ENCODE measurements at regions of chr12 and their contacts with region 1.

Region 1: DNA sequence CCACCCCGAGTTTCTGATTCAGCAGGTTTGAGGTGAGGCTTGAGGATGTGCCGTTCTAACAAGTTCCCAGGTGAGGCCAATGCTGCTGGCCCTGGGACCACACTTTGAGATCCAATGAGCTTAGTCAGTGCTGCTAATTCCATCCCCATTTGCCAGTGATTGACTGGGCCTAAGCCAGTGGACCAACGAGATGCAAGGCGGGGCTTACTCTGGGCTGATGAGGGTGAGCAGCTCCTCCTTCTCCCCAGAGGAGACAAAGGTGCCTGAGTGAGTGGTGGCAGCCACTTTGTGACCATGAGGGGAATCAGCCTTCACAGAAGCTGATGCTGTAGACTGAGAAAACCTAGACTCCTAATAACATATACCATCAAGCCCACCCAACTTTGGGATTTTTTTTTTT is 23.1 kb upstream of the HNF1A start:
- DNase-seq: peak; percentile 80
- ATAC-seq: peak; percentile 97
- H3K4me3 ChIP-seq: no peak overlapping the region
- H3K27ac ChIP-seq: no peak overlapping the region
- H3K4me1 ChIP-seq: peaks cover 12 to 39% of the 10 kb centered on the region in 2 experiments; a peak in 3 of 4 replicates
- H3K27me3 ChIP-seq: no peaks in the 10 kb centered on the region
- CTCF ChIP-seq: no peak
- POLR2A ChIP-seq: no peak
- RAD21 ChIP-seq: no peak

Region 2: DNA sequence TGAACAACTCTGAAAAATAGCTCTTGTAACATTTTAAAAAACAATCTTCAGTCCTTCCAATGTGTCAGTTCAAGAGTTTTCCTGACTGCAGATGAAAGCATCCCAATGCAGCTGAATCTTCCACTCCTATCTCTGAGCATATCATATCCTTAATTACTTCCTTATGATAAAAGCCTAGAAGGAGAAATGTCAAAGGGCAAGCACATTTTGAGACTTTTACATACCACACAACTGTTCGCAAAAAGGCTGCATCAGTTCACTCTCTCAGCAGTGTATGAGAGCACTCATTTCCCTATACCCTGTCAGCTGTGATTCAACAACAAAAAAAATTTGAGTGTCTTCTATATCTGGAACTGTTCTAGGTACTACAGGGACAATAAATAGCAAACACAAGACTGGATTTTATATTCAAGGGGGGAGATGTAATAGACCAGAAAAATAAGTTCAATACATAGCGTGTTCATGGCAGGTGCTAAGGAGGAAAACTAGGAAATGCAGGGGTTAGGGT is 163.5 kb before region 1 on chr12:
- CTCF ChIA-PET with region 1: no interaction called
- POLR2A ChIA-PET with region 1: no interaction called
- RAD21 ChIA-PET with region 1: no interaction called
- intact Hi-C with region 1: no loop called
- DNase-seq: no peak
- ATAC-seq: no peak
- H3K4me3 ChIP-seq: no peak overlapping the region
- H3K27ac ChIP-seq: no peak overlapping the region
- H3K4me1 ChIP-seq: no peaks in the 10 kb centered on the region
- H3K27me3 ChIP-seq: no peaks in the 10 kb centered on the region
- CTCF ChIP-seq: no peak
- POLR2A ChIP-seq: no peak
- RAD21 ChIP-seq: no peak

Region 3: DNA sequence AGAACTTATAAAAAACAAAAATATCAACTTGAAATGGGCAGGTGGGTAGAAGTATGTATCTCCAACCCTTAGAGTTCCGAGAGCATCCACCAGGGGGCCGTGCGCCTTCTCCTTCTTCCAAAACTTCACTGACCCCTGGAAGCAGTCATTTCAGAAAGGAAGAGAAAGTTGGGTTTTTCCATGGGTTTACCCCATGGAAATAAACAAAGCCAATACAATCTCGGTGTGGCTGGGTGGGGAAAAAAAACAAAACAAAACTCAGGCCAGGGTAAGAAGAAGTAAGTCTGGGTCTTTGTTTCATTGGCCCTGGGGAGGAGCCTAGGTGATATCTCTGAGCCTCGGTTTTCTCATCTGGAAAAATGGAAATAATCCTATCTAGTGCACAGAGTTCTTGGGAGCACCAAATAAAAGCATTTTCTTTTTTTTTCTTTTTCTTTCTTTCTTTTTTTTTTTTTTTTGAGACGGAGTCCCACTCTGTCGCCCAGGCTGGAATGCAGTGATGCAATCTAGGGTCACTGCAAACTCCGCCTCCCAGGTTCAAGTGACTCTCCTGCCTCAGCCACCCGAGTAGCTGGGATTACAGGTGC is 10.5 kb before region 1 on chr12:
- CTCF ChIA-PET with region 1: interaction called, 16 read pairs
- POLR2A ChIA-PET with region 1: interaction called, 8 read pairs
- RAD21 ChIA-PET with region 1: no interaction called
- intact Hi-C with region 1: no loop called
- DNase-seq: no peak
- ATAC-seq: peak; percentile 92
- H3K4me3 ChIP-seq: no peak overlapping the region
- H3K27ac ChIP-seq: no peak overlapping the region
- H3K4me1 ChIP-seq: peaks cover 4 to 12% of the 10 kb centered on the region in 2 experiments; a peak in 3 of 4 replicates
- H3K27me3 ChIP-seq: no peaks in the 10 kb centered on the region
- CTCF ChIP-seq: peak; percentile 65 to 88 (median 80); a peak in 5 of 6 replicates
- POLR2A ChIP-seq: no peak
- RAD21 ChIP-seq: peak; percentile 66